Right ventricle myocardium inferior (tissue), 1 donor: ENCODE measurements at regions of chr11 and their contacts with region 1.

Region 1: GRCh38 chr11:120210626-120211521 is at the start of gene OAF:
- DNase-seq: peak; percentile 89
- ATAC-seq: peak; percentile 89
- total RNA-seq, gene OAF: 34.5 TPM

Region 2: DNA sequence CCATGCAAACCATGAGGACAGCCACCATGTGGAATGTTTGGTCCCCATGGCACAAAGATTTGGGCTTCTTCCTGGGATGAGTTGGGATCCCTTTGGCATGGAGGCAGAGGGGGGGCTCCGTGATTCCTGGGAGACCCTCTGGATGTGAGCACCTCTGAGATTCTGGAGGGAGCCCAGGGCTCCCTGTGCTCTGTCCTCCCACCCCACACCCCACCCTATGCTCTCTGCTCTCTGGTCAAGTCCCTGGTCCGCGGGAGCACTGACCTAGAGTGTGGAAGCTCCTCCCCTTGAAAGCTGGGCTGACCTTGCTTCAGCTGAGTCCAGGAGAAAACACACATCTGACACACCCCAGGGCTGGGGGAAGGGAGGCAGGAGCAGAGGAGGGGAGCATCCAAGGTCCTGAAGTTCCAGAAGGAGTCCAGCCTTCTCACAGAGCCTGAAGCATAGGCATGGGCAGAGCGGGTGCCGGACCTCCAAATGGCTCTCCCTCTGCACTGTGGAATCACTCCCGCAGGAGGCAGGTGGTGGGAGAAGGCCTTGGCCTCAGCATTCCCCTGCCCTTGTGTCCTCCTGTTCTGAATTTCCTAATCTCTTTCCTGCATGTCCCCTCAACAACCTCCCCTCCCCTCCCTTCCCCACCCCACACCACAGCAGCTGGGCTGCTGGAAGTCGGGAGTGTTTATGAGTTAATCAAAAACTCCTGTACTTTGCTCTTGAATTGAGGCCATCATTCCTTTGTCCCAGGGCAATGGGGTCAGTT is 25.7 kb before region 1 on chr11:
- intact Hi-C with region 1: loop called (anchors 2 kb)
- DNase-seq: peak; percentile 87
- ATAC-seq: peak; percentile 80